ENCODE measurements at regions of chr6 and their contacts with region 1.

Region 1: GRCh38 chr6:78199044-78199443 is 546.2 kb downstream of the MEI4 start:
- DNase-seq: no peak
- H3K4me3 ChIP-seq: no peak overlapping the region
- H3K27ac ChIP-seq: no peak overlapping the region
- H3K4me1 ChIP-seq: no peaks in the 10 kb centered on the region
- H3K27me3 ChIP-seq: no peaks in the 10 kb centered on the region
- CTCF ChIP-seq: no peak

Region 2: DNA sequence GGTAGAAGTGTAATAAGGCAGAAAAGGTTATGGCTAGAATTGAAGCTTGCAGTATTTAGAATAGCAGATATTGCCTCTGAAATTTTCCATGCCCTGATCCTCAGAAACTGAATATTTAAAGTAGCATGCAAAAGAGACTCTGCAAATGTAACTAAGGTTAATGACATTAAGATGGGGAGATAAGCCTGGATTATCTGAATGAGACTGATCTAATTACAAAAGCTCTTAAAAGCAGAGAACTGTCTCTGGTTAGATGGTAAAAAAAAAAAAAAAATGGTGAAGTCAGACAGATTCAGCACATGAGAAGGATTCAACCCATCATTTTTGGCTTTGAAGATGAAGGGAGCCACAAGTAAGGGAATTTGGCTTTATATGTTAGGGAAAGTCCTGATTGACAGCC is 164.6 kb after region 1 on chr6:
- CTCF ChIA-PET with region 1: no interaction called
- POLR2A ChIA-PET with region 1: no interaction called
- intact Hi-C with region 1: no loop called
- DNase-seq: no peak
- H3K4me3 ChIP-seq: no peak overlapping the region
- H3K27ac ChIP-seq: no peak overlapping the region
- H3K4me1 ChIP-seq: no peaks in the 10 kb centered on the region
- H3K27me3 ChIP-seq: no peaks in the 10 kb centered on the region
- CTCF ChIP-seq: no peak

Region 3: DNA sequence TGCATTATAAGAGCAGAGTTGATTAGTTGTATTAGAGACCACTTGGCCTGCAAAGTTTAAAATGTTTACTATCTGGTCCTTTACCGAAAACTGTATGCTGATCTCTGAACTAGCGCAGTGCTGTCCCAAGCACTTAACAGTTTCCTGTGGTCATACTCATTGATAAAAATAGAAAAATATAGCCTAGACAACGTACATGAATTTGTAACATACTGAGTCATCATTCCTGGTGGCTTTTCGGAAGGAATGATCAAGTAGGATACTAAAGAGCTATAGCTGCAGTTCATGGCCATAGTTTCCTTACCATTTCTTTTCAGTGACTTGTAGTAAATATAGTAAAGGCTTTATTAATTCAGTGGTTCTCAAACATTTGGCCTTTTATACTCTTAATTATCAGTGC is 1823.8 kb after region 1 on chr6:
- CTCF ChIA-PET with region 1: no interaction called
- POLR2A ChIA-PET with region 1: interaction called, 14 read pairs
- intact Hi-C with region 1: no loop called
- DNase-seq: no peak
- H3K4me3 ChIP-seq: no peak overlapping the region
- H3K27ac ChIP-seq: no peak overlapping the region
- H3K4me1 ChIP-seq: no peaks in the 10 kb centered on the region
- H3K27me3 ChIP-seq: no peaks in the 10 kb centered on the region
- CTCF ChIP-seq: no peak